Right cardiac atrium (tissue), 5 donors: ENCODE measurements at regions of chr17 and their contacts with region 1.

Region 1: GRCh38 chr17:38358586-38359513 is 7.2 kb downstream of the SOCS7 start:
- DNase-seq: no peak
- ATAC-seq: no peak
- H3K4me3 ChIP-seq: no peak overlapping the region
- H3K27ac ChIP-seq: peak overlapping the region; percentile 62
- H3K4me1 ChIP-seq: peaks cover 5% of the 10 kb centered on the region
- H3K27me3 ChIP-seq: no peaks in the 10 kb centered on the region

Region 2: DNA sequence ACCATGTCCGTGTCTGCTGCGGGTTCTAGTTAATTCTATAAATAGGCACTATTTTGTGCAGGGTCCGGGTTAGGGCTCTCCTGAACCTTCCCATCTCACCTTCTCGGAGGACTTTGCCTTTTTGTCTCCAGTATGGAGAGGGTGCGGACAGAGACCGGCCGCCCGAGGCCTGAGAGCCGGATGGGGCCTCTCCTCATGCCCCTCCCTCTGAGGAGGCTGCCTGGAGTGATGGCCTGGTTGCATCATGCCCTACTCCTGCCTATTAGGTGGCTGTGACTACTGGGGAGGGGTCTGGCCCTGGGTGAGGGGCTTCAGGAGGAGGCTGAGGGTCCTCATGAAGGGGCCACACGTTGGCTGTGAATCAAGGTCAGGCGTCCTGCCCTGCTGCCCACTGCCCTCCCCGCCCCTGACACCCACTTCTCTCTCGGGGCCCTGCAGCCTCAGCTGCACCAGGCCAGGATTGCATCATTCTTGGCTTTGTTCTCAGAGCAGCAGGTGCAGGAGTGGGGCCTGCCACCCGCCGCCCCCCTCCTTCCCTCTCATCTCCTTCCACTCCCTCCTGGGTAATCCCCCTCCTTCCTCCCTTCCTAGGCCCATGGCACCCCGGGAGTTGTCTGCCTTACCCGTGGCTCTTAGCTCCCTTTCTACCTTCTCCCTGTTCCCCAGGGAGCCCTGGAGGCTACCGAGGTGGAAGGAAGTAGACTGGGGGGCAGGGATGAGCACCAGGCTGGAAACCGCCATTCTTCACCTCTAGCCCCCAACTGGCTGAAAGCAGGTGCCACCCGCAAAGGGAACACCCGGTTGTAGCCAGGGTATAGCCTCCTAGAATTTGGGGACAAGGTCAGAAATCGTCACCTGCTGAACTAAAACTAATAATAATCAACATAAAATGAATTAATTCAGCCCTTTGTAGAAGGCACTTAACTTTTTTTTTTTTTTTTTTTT is 56.7 kb after region 1 on chr17:
- intact Hi-C with region 1: loop called in 1 of 4 experiments (anchors 5 kb)
- DNase-seq: peak in 1 of 3 donors; percentile 57
- ATAC-seq: peak in 1 of 2 donors; percentile 8
- H3K4me3 ChIP-seq: no peak overlapping the region
- H3K27ac ChIP-seq: no peak overlapping the region
- H3K4me1 ChIP-seq: no peaks in the 10 kb centered on the region
- H3K27me3 ChIP-seq: no peaks in the 10 kb centered on the region

Region 3: DNA sequence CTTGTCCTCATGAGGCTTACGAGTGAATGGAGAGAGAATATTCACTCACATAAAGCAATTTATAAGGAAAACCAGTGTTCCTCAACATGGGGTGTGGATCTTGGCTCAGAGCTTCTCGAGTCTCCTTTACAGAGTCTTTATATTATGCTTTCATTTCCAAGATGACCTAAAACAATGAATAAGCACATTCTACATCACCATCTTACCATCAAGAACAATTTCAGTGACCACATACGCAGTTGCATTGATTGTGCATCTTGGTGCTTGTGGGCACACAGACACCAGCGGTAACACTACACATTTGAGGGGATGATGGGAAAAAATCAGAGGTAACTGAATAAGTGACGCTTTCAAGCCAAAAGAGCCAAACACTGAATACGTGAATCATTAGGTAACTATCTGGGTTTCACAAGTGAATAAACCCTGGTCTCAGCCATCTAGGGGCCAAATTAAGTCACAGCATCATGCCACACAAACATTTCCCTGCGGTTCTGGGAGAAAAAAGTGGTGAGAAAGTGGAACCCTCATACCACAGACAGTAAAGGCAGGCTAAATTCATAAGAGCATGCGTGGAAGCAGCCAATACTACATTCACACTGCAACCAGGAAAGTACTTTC is 456.8 kb after region 1 on chr17:
- intact Hi-C with region 1: no loop called
- DNase-seq: no peak
- ATAC-seq: no peak
- H3K4me3 ChIP-seq: no peak overlapping the region
- H3K27ac ChIP-seq: no peak overlapping the region
- H3K4me1 ChIP-seq: no peaks in the 10 kb centered on the region
- H3K27me3 ChIP-seq: no peaks in the 10 kb centered on the region